ENCODE measurements at regions of chr2 and their contacts with region 1.

Region 1: GRCh38 chr2:66574701-66575624 is 140.0 kb downstream of the MEIS1 start:
- DNase-seq: peak; percentile 83 to 90
- H3K4me3 ChIP-seq: peak overlapping the region; percentile 49 to 54
- H3K27ac ChIP-seq: peak overlapping the region; percentile 94 to 99
- H3K4me1 ChIP-seq: peaks cover 0 to 2% of the 10 kb centered on the region in 2 donors
- H3K27me3 ChIP-seq: no peaks in the 10 kb centered on the region
- CTCF ChIP-seq: peak; percentile 42 to 69 (median 50)
- POLR2A ChIP-seq: no peak

Region 2: GRCh38 chr2:66434679-66435548 is 140.0 kb before region 1 on chr2 and contains the start of gene MEIS1:
- intact Hi-C with region 1: loop called (anchors 2 kb)
- DNase-seq: peak; percentile 95 to 98
- H3K4me3 ChIP-seq: peak within 1 kb of the TSS; percentile 80 to 97
- H3K27ac ChIP-seq: peak within 1 kb of the TSS; percentile 96 to 100
- H3K4me1 ChIP-seq: no peaks in the 10 kb centered on the region
- H3K27me3 ChIP-seq: no peaks in the 10 kb centered on the region
- CTCF ChIP-seq: peak in 1 of 4 experiments; percentile 10
- POLR2A ChIP-seq: peak; percentile 92 to 97
- total RNA-seq, gene MEIS1: 110 to 418 (median 233) TPM

Region 3: DNA sequence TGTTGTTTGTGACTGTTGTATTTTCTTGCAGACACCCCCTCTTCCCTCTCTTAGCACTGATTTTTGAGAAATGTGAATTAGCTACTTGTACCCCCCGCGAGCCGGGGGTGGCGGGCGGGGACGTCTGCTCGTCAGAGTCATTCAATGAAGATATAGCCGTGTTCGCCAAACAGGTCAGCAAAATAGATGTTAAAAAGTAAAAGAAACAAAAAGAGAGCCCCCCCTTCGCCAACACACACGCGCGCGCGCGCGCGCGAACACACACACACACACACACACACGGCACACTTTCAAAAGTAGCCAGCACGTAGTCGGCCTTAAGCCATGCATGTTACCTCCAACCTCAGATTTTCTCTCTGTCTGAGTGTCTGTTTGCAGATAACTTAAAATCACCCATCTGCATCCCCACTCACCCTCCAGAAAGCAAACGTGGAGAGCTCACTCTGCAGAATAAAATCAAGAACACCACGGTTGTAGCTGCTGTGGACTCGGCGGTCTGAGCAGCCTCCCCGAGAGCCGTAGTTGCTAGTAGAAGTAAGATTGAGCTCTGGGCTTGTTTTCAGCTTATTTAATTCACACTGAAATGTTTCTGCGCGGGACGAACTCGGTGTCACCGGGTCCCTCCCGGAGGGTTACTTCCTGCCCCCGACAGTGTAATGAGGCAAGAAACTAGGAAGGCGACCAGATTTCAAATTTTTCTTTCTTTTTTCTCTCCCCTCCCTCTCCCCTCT is 135.0 kb before region 1 on chr2:
- intact Hi-C with region 1: loop called (anchors 2 kb)
- DNase-seq: no peak
- H3K4me3 ChIP-seq: peak overlapping the region; percentile 80 to 97
- H3K27ac ChIP-seq: peak overlapping the region; percentile 96 to 100
- H3K4me1 ChIP-seq: no peaks in the 10 kb centered on the region
- H3K27me3 ChIP-seq: no peaks in the 10 kb centered on the region
- CTCF ChIP-seq: no peak
- POLR2A ChIP-seq: no peak

Region 4: GRCh38 chr2:66633631-66634030 is 58.7 kb after region 1 on chr2:
- intact Hi-C with region 1: no loop called
- DNase-seq: no peak
- H3K4me3 ChIP-seq: no peak overlapping the region
- H3K27ac ChIP-seq: no peak overlapping the region
- H3K4me1 ChIP-seq: no peaks in the 10 kb centered on the region
- H3K27me3 ChIP-seq: no peaks in the 10 kb centered on the region
- CTCF ChIP-seq: no peak
- POLR2A ChIP-seq: no peak

Region 5: GRCh38 chr2:66699793-66700676 is 125.1 kb after region 1 on chr2:
- intact Hi-C with region 1: loop called (anchors 5 kb)
- DNase-seq: no peak
- H3K4me3 ChIP-seq: no peak overlapping the region
- H3K27ac ChIP-seq: peak overlapping the region; percentile 87 to 97
- H3K4me1 ChIP-seq: peaks cover 0 to 12% of the 10 kb centered on the region in 2 donors
- H3K27me3 ChIP-seq: no peaks in the 10 kb centered on the region
- CTCF ChIP-seq: no peak
- POLR2A ChIP-seq: no peak

Region 6: DNA sequence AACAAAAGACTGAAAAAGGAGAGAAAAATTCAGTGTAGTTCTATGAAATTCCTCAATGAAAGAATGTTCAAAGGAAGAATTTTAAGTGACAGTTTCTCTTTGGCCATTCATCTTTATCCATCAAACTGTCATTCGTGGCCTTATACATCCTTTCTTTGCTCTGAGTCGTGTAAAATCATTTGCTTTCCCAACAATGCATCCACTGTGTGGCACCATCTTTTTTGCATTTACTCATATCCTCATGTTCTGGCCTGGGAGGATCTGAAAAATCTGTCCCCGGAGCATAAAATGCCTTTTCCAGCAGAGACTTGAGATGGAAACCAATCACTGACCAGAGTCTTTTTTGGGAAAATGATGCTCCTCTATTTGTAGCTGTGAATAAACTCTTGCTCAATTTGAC is 581.8 kb after region 1 on chr2:
- intact Hi-C with region 1: no loop called
- DNase-seq: no peak
- H3K4me3 ChIP-seq: no peak overlapping the region
- H3K27ac ChIP-seq: no peak overlapping the region
- H3K4me1 ChIP-seq: no peaks in the 10 kb centered on the region
- H3K27me3 ChIP-seq: no peaks in the 10 kb centered on the region
- CTCF ChIP-seq: no peak
- POLR2A ChIP-seq: no peak

Measured in uterus (tissue), 4 donors.